Esophagus muscularis mucosa (tissue), 4 donors: ENCODE measurements at regions of chr2 and their contacts with region 1.

Region 1: DNA sequence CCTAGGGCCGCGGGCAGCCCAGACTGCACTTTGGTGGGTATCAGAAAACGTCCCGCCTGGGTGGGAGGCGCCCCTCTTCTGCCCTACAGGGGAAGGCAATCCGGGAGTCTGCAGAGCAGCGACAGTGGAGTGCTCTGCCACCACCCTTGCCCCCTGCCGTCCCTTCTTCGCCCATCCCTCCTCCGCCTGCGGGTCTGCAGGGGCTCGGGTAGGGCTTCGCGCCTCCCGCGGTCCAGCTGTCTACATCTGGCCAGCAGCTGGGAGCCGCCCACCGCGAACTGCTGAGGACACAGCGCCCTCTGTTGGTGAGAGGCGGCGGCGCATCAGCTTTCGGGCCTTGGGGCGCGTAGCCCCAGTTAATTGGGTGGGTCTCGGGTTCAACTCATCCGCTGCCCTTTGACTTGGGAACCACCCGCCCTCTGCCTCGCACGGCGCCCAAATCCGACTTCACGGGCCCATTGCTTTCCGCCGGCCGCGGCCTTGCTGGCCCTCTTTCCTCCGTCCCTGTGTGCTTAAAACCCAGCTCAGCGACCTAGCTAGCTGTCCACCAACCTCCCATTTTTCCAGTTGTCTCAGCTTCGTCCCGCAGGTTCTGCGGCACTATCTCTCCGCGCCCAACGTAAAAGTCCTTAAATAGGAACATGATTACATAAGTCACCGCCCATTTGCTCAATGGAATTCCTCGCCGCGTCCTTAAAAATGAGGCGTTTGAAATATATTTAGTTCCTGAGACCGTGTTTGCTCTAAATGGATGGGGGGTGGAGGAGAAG is 17.6 kb downstream of the WNT10A start:
- DNase-seq: no peak
- H3K4me3 ChIP-seq: peak overlapping the region in 3 of 4 donors; percentile 20 to 34 (median 27)
- H3K27ac ChIP-seq: no peak overlapping the region
- H3K4me1 ChIP-seq: peaks cover 23 to 33% (median 31%) of the 10 kb centered on the region in 4 donors
- H3K27me3 ChIP-seq: peaks cover 0 to 100% (median 68%) of the 10 kb centered on the region in 4 donors
- CTCF ChIP-seq: peak in 2 of 3 experiments; percentile 89 to 97
- EP300 ChIP-seq: no peak
- POLR2A ChIP-seq: no peak

Region 2: DNA sequence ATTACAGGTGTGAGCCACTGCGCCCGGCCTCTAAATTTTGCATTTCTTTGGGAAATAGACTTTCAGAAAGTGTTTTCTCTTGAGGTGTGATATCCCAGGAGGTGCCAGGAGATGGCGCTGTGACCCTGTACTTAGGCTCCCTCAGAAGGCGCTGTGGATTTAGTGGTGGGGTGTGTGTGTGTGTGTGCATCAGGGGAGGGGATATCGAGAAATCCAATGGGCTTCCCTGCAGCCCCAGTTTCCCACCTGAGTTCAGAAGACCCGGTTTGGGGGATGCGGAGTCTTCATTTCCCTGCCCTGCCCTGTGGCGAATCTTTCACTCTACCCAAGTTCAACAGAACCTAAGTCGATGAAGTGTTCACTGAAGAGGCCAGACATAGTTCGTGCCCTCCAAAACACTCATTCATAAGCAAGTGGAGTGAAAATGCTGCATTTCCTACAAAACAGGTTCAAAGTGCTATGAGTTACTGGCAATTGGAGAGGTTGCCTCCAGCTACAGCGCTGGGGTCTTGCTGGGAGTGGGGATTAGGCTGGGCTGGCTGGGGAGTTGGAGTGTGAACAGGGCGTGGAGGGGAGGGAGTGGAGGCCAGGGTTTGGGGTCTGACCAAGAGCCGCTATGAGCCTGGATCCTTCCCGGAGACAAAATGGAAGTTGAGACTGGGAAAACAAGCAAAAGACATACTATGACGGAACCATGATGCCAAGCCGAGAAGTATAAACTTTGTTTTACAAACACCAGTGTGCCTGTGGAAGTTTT is 45.2 kb before region 1 on chr2:
- intact Hi-C with region 1: loop called (anchors 2 kb)
- DNase-seq: no peak
- H3K4me3 ChIP-seq: no peak overlapping the region
- H3K27ac ChIP-seq: no peak overlapping the region
- H3K4me1 ChIP-seq: peaks cover 0 to 4% (median 1%) of the 10 kb centered on the region in 4 donors
- H3K27me3 ChIP-seq: peaks cover 0 to 91% (median 25%) of the 10 kb centered on the region in 4 donors
- CTCF ChIP-seq: peak; percentile 54 to 66 (median 64)
- EP300 ChIP-seq: no peak
- POLR2A ChIP-seq: no peak

Region 3: GRCh38 chr2:218876562-218877219 is 21.6 kb before region 1 on chr2:
- intact Hi-C with region 1: loop called (anchors 1 kb)
- DNase-seq: no peak
- H3K4me3 ChIP-seq: no peak overlapping the region
- H3K27ac ChIP-seq: no peak overlapping the region
- H3K4me1 ChIP-seq: peaks cover 11 to 45% (median 26%) of the 10 kb centered on the region in 4 donors
- H3K27me3 ChIP-seq: peaks cover 0 to 99% (median 74%) of the 10 kb centered on the region in 4 donors
- CTCF ChIP-seq: peak; percentile 85 to 98 (median 93)
- EP300 ChIP-seq: no peak
- POLR2A ChIP-seq: no peak

Region 4: GRCh38 chr2:218959141-218959731 is 60.9 kb after region 1 on chr2 and contains the start of gene CDK5R2:
- intact Hi-C with region 1: no loop called
- DNase-seq: no peak
- H3K4me3 ChIP-seq: peak within 1 kb of the TSS; percentile 44 to 54 (median 48)
- H3K27ac ChIP-seq: no peak within 1 kb of the TSS
- H3K4me1 ChIP-seq: peaks cover 0 to 46% (median 33%) of the 10 kb centered on the region in 4 donors
- H3K27me3 ChIP-seq: peaks cover 0 to 98% (median 52%) of the 10 kb centered on the region in 4 donors
- CTCF ChIP-seq: no peak
- EP300 ChIP-seq: no peak
- POLR2A ChIP-seq: no peak
- total RNA-seq, gene CDK5R2: under 0.01 to 0.52 (median 0.33) TPM in 3 of 4 donors, not detected in the other

Region 5: GRCh38 chr2:219230059-219230540 is 331.8 kb after region 1 on chr2:
- intact Hi-C with region 1: no loop called
- DNase-seq: no peak
- H3K4me3 ChIP-seq: peak overlapping the region; percentile 63 to 88 (median 80)
- H3K27ac ChIP-seq: peak overlapping the region; percentile 90 to 98 (median 94)
- H3K4me1 ChIP-seq: peaks cover 27 to 52% (median 40%) of the 10 kb centered on the region in 4 donors
- H3K27me3 ChIP-seq: no peaks in the 10 kb centered on the region
- CTCF ChIP-seq: no peak
- EP300 ChIP-seq: no peak
- POLR2A ChIP-seq: no peak